ENCODE measurements at regions of chr18 and their contacts with region 1.

Region 1: GRCh38 chr18:13566941-13567746 is 159.2 kb downstream of the FAM210A start:
- H3K4me3 Mint-ChIP-seq: peak overlapping the region; percentile 46
- H3K27ac Mint-ChIP-seq: peak overlapping the region; percentile 91
- H3K4me1 Mint-ChIP-seq: peaks cover 85% of the 10 kb centered on the region
- H3K27me3 Mint-ChIP-seq: no peaks in the 10 kb centered on the region

Region 2: DNA sequence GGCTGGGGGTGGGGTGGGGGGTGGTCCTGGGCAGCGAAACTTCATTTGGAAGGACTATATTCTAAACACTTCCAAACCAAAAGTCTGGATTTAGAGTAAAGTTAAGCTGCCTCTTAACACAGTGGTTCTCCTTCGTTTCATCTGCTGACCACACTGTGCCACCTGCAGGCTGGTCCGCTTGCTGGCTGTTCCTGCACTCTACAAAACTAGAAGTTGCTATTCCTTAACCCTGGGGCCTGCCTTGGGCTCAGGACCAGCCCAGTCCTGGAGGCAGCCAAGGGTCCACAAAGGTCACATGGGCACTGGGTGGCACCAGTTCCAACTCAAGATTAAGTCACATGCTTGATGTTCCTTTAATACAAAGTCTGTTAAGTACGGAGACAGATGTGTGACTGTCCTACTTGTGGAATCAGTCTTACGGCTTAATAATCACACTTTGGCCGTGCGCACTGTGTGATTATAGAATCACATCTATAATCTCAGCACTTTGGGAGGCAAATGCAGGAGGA is 36.2 kb before region 1 on chr18:
- intact Hi-C with region 1: no loop called
- H3K4me3 Mint-ChIP-seq: no peak overlapping the region
- H3K27ac Mint-ChIP-seq: no peak overlapping the region
- H3K4me1 Mint-ChIP-seq: peaks cover 17% of the 10 kb centered on the region
- H3K27me3 Mint-ChIP-seq: no peaks in the 10 kb centered on the region

Region 3: GRCh38 chr18:13577091-13577697 is 10.1 kb after region 1 on chr18:
- intact Hi-C with region 1: loop called (anchors 1 kb)
- H3K4me3 Mint-ChIP-seq: peak overlapping the region; percentile 62
- H3K27ac Mint-ChIP-seq: peak overlapping the region; percentile 97
- H3K4me1 Mint-ChIP-seq: peaks cover 79% of the 10 kb centered on the region
- H3K27me3 Mint-ChIP-seq: no peaks in the 10 kb centered on the region